H1 (cell line): ENCODE measurements at regions of chr9 and their contacts with region 1.

Region 1: DNA sequence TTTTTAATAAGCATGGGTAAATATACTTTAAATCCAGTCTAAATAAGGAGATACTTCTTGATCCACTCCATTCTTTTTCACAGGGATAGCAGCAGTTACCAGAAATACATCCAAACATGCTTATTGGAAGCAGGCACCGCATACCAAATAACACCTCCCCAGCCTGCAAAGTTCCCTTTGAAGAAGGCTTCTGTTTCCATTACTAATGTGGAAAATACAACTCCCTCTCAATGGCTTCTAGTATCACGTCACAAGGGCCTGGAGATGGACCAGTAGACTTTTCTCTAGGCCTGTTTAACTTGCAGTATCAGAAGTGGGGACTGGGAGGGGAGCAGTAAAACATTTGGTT is 20.8 kb downstream of the TMEM245 start:
- DNase-seq: no peak
- H3K4me3 ChIP-seq: no peak overlapping the region
- H3K27ac ChIP-seq: no peak overlapping the region
- H3K4me1 ChIP-seq: peaks cover 2 to 11% (median 5%) of the 10 kb centered on the region in 4 experiments; a peak in 5 of 7 replicates
- H3K27me3 ChIP-seq: no peaks in the 10 kb centered on the region
- CTCF ChIP-seq: no peak
- EP300 ChIP-seq: no peak
- POLR2A ChIP-seq: no peak
- RAD21 ChIP-seq: no peak

Region 2: GRCh38 chr9:109001275-109001676 is 97.7 kb before region 1 on chr9:
- CTCF ChIA-PET with region 1: no interaction called
- POLR2A ChIA-PET with region 1: no interaction called
- DNase-seq: no peak
- H3K4me3 ChIP-seq: no peak overlapping the region
- H3K27ac ChIP-seq: no peak overlapping the region
- H3K4me1 ChIP-seq: no peaks in the 10 kb centered on the region
- H3K27me3 ChIP-seq: no peaks in the 10 kb centered on the region
- CTCF ChIP-seq: no peak
- EP300 ChIP-seq: no peak
- POLR2A ChIP-seq: no peak
- RAD21 ChIP-seq: no peak

Region 3: GRCh38 chr9:109052416-109052815 is 46.5 kb before region 1 on chr9:
- CTCF ChIA-PET with region 1: no interaction called
- POLR2A ChIA-PET with region 1: no interaction called
- DNase-seq: no peak
- H3K4me3 ChIP-seq: no peak overlapping the region
- H3K27ac ChIP-seq: no peak overlapping the region
- H3K4me1 ChIP-seq: peaks cover 0 to 6% (median 0%) of the 10 kb centered on the region in 4 experiments; a peak in 1 of 7 replicates
- H3K27me3 ChIP-seq: no peaks in the 10 kb centered on the region
- CTCF ChIP-seq: no peak
- EP300 ChIP-seq: no peak
- POLR2A ChIP-seq: no peak
- RAD21 ChIP-seq: no peak

Region 4: DNA sequence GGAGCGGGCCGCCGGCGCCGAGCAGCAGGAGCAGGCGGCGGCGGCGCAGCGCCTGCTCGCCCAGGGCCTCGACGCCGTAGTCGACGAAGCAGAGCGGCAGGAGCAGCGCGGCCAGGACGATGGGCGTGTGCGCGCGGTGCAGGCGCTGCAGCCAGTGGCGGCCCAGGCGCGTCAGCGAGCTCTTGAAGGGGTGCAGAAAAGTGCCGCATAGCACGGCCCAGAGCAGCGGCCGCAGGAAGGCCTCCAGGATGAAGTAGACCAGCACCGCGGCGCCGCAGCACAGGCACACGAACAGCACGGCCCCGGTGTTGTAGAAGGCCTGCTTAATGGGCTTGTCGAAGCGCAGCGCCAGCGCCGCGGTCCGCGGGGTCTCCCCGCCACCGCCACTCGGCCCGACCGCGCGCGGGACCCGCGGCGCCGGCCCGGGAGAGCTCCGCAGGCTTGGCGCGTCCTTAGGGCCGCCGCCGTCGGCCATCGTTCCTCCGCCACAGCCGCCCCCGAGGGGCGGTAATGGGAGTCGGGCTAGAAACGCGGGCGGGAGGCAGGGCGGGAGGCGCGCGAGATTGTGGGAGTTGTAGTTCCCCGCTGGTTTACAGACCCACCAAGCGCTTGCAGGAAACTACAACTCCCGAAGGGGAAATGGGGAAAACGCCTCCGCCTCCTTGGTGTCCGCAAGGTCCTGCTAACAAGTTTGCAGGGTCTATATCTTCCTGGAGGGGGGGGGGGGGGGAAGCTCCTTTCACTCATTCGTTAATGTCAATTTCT is 20.7 kb after region 1 on chr9 and contains the start of gene TMEM245:
- CTCF ChIA-PET with region 1: interaction called, 4 read pairs
- POLR2A ChIA-PET with region 1: interaction called, 11 read pairs
- DNase-seq: peak; percentile 91 to 97
- H3K4me3 ChIP-seq: peak within 1 kb of the TSS; percentile 65 to 91 (median 82)
- H3K27ac ChIP-seq: peak within 1 kb of the TSS; percentile 84
- H3K4me1 ChIP-seq: peaks cover 7 to 16% (median 13%) of the 10 kb centered on the region in 4 experiments
- H3K27me3 ChIP-seq: no peaks in the 10 kb centered on the region
- CTCF ChIP-seq: no peak
- EP300 ChIP-seq: no peak
- POLR2A ChIP-seq: peak; percentile 87 to 90
- RAD21 ChIP-seq: no peak
- total RNA-seq, gene TMEM245: 42.1 and 44.3 TPM in 2 replicates

Region 5: GRCh38 chr9:109422641-109423040 is 323.7 kb after region 1 on chr9:
- CTCF ChIA-PET with region 1: no interaction called
- POLR2A ChIA-PET with region 1: no interaction called
- DNase-seq: no peak
- H3K4me3 ChIP-seq: no peak overlapping the region
- H3K27ac ChIP-seq: no peak overlapping the region
- H3K4me1 ChIP-seq: peaks cover 0 to 5% (median 0%) of the 10 kb centered on the region in 4 experiments; a peak in 1 of 7 replicates
- H3K27me3 ChIP-seq: no peaks in the 10 kb centered on the region
- CTCF ChIP-seq: no peak
- EP300 ChIP-seq: no peak
- POLR2A ChIP-seq: no peak
- RAD21 ChIP-seq: no peak